Left lung (tissue), 14 donors: ENCODE measurements at regions of chr7 and their contacts with region 1.

Region 1: GRCh38 chr7:31744294-31744874 is 57.4 kb downstream of the PPP1R17 start:
- DNase-seq: peak in 2 of 4 donors; percentile 39 to 69
- ATAC-seq: peak; percentile 92
- H3K4me3 ChIP-seq: no peak overlapping the region
- H3K27ac ChIP-seq: no peak overlapping the region
- H3K4me1 ChIP-seq: no peaks in the 10 kb centered on the region
- H3K27me3 ChIP-seq: no peaks in the 10 kb centered on the region
- CTCF ChIP-seq: peak; percentile 80 to 87

Region 2: DNA sequence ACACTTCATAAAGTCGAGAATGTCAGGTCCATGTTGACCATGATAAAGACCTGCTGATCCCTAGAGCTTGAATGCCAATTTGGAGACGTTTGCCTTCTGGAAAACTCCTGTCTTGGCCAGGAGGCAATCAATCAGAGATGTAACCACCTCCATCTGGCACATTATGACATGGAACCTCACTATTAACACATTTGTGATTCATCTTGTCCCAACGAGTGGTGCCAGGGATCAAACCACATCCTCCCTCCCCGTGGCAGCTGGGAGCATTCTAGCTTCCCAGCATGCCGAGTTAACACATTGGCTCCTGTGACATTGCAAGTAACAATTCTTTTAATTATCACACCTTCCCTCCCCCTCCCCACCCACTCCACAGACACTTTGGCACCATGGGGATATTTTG is 141.3 kb before region 1 on chr7:
- intact Hi-C with region 1: no loop called
- DNase-seq: no peak
- ATAC-seq: no peak
- H3K4me3 ChIP-seq: no peak overlapping the region
- H3K27ac ChIP-seq: no peak overlapping the region
- H3K4me1 ChIP-seq: no peaks in the 10 kb centered on the region
- H3K27me3 ChIP-seq: no peaks in the 10 kb centered on the region
- CTCF ChIP-seq: no peak

Region 3: DNA sequence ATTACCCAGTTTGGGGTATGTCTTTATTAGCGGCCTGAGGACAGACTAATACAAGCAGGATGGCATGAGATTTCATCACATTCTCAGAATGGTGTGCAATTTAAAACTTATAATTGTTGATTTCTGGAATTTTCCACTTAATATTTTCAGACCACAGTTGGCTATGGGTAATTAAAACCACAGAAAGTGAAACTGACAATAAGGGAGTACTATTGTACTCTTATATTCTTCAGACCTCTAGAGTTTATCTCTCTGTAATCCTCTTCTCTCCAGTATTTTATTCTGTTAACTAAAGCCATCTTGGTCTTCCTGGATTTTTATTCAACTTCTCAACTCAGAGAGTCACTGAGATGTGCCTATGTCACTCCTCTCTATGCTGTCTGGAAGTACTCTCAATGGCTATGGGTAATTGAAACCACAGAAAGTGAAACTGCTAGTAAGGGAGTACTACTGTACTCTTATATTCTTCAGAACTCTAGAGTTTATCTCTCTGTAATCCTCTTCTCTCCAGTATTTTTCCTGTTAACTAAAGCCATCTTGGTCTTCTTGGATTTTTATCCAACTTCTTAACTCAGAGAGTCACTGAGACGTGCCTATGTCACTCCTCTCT is 60.9 kb after region 1 on chr7:
- intact Hi-C with region 1: no loop called
- DNase-seq: no peak
- ATAC-seq: no peak
- H3K4me3 ChIP-seq: no peak overlapping the region
- H3K27ac ChIP-seq: peak overlapping the region in 1 of 2 donors; percentile 19
- H3K4me1 ChIP-seq: no peaks in the 10 kb centered on the region
- H3K27me3 ChIP-seq: no peaks in the 10 kb centered on the region
- CTCF ChIP-seq: no peak

Region 4: GRCh38 chr7:32204361-32205018 is 460.1 kb after region 1 on chr7:
- intact Hi-C with region 1: loop called in 1 of 2 experiments (anchors 5 kb)
- DNase-seq: peak in 3 of 4 donors; percentile 33 to 74 (median 43)
- ATAC-seq: peak; percentile 95
- H3K4me3 ChIP-seq: peak overlapping the region in 1 of 2 donors; percentile 9
- H3K27ac ChIP-seq: no peak overlapping the region
- H3K4me1 ChIP-seq: no peaks in the 10 kb centered on the region
- H3K27me3 ChIP-seq: peaks cover 0 to 13% of the 10 kb centered on the region in 2 donors
- CTCF ChIP-seq: peak; percentile 46 to 55

Region 5: GRCh38 chr7:32347244-32347828 is 603.0 kb after region 1 on chr7:
- intact Hi-C with region 1: loop called in 1 of 2 experiments (anchors 5 kb)
- DNase-seq: peak in 1 of 4 donors; percentile 12
- ATAC-seq: no peak
- H3K4me3 ChIP-seq: no peak overlapping the region
- H3K27ac ChIP-seq: no peak overlapping the region
- H3K4me1 ChIP-seq: no peaks in the 10 kb centered on the region
- H3K27me3 ChIP-seq: no peaks in the 10 kb centered on the region
- CTCF ChIP-seq: peak; percentile 50 to 63